OCI-LY7 (cell line): ENCODE measurements at regions of chr2 and their contacts with region 1.

Region 1: GRCh38 chr2:37026050-37026449 is 58.1 kb downstream of the HEATR5B start:
- DNase-seq: peak; percentile 25
- H3K4me3 ChIP-seq: no peak overlapping the region
- H3K27ac ChIP-seq: no peak overlapping the region
- H3K4me1 ChIP-seq: no peaks in the 10 kb centered on the region
- CTCF ChIP-seq: peak; percentile 70

Region 2: GRCh38 chr2:36785179-36785795 is 240.8 kb before region 1 on chr2:
- CTCF ChIA-PET with region 1: no interaction called
- POLR2A ChIA-PET with region 1: no interaction called
- intact Hi-C with region 1: loop called (anchors 10 kb)
- DNase-seq: peak; percentile 62
- H3K4me3 ChIP-seq: no peak overlapping the region
- H3K27ac ChIP-seq: no peak overlapping the region
- H3K4me1 ChIP-seq: peaks cover 9% of the 10 kb centered on the region
- CTCF ChIP-seq: peak; percentile 98

Region 3: GRCh38 chr2:37244017-37244416 is 218.0 kb after region 1 on chr2:
- CTCF ChIA-PET with region 1: no interaction called
- POLR2A ChIA-PET with region 1: no interaction called
- intact Hi-C with region 1: no loop called
- DNase-seq: no peak
- H3K4me3 ChIP-seq: no peak overlapping the region
- H3K27ac ChIP-seq: no peak overlapping the region
- H3K4me1 ChIP-seq: no peaks in the 10 kb centered on the region
- CTCF ChIP-seq: no peak